Activated naive CD4-positive, alpha-beta T cell treated with anti-CD3 and anti-CD28 coated beads for 36 hours (primary cell): ENCODE measurements at regions of chr12 and their contacts with region 1.

Region 1: DNA sequence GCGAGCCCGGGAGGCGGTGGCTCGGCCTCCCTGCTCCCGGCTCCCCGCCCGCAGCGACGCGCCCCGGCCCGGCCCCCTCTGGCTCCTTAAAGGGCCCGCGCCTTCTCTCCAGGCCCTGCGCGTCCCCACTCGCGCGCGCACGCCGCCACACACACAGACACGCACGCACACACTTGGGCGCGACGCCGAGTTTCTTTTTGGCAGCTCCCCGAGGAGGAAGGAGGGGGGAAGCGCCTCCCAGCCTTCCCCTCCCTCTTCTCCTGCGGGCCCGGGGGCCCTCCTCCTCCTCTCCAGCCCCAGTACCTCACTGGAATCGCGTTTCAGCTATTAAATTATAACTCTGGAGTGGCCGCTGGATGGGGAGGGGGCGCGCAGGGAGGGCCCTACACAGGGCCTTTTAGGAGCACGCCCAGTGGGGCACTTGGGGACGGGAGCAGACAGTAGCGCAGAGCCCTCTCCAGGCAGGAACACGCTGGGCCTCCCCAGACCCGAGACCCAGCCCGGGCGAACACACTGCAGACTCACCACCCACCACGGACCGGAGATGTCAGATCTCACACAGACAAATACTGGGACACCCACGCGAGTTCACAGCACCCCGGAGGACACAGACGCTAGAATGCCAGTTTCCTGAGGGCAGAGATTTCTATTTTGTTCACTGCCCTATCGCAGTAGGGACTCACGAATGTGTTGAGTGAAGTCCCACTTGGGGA is 405 bp upstream of the NCOR2 start:
- DNase-seq: peak; percentile 77
- H3K4me3 Mint-ChIP-seq: peak overlapping the region; percentile 80
- H3K27ac Mint-ChIP-seq: peak overlapping the region; percentile 87
- H3K4me1 Mint-ChIP-seq: peaks cover 33% of the 10 kb centered on the region
- H3K27me3 Mint-ChIP-seq: no peaks in the 10 kb centered on the region

Region 2: DNA sequence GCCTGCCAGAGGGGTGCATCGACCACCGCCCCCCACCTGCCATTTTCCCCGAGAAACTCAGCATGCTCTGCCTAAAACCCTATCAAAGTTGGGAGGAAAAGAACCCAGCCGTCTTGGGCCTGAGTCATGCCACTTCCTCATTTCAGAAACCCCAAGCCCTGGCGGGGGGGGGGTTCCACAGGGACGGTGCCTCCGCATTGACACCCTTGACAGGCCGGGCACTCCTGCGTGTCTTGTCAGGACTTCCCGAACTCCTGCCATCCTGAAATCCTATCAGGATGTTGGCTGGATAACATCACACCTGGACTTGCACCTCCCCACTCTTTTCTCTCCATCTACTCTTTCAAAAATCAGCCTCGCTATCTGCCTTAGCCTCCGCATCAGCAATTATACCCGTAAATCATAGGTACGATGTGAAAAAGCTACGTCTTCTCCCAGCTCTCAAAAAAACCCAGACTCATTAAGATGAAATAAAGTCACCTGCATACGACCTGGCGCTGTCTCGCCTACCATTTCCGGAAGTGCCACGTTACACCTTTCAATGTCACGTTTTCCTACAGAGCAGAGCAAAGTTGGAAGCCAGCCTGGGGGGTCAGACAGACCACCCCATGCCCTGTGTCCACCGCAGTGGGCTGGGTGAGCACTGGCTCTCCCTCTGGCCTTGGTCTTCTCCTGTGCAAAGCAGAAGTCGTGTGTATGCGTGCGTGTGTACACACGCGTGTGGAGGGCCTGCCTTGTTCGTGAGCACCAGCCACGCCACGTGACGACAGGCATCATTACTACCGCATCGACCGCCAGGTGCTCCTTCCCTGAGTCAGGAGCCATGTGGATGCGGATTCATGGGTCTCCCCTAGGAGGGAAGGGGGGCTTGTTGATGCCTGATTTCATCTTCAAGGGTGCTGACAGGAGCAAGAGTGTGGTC is 176.2 kb before region 1 on chr12:
- CTCF ChIA-PET with region 1: interaction called, 4 read pairs
- intact Hi-C with region 1: loop called (anchors 5 kb)
- DNase-seq: peak; percentile 77
- H3K4me3 Mint-ChIP-seq: peak overlapping the region; percentile 16
- H3K27ac Mint-ChIP-seq: peak overlapping the region; percentile 88
- H3K4me1 Mint-ChIP-seq: peaks cover 34% of the 10 kb centered on the region
- H3K27me3 Mint-ChIP-seq: no peaks in the 10 kb centered on the region

Region 3: DNA sequence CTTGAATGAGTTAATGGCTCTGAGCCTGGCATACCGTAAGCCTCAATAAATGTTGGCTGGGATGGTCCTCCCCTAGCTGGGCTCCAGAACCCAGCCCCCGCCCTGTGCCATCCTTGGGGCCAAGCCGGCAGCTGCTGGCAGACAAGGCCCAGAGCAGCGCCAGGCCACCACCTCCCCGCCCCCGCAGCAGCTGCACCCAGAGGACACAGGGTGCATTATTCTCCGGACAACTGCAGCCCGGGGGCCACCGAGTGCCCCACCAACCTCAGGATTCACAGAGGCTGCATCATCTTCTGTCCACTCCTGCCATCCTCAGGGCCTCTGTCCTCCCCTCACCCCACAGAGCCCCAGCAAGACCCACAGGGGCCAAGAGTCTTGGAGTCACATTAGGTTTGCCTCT is 93.1 kb before region 1 on chr12:
- CTCF ChIA-PET with region 1: no interaction called
- intact Hi-C with region 1: no loop called
- DNase-seq: no peak
- H3K4me3 Mint-ChIP-seq: no peak overlapping the region
- H3K27ac Mint-ChIP-seq: no peak overlapping the region
- H3K4me1 Mint-ChIP-seq: peaks cover 17% of the 10 kb centered on the region
- H3K27me3 Mint-ChIP-seq: no peaks in the 10 kb centered on the region

Region 4: DNA sequence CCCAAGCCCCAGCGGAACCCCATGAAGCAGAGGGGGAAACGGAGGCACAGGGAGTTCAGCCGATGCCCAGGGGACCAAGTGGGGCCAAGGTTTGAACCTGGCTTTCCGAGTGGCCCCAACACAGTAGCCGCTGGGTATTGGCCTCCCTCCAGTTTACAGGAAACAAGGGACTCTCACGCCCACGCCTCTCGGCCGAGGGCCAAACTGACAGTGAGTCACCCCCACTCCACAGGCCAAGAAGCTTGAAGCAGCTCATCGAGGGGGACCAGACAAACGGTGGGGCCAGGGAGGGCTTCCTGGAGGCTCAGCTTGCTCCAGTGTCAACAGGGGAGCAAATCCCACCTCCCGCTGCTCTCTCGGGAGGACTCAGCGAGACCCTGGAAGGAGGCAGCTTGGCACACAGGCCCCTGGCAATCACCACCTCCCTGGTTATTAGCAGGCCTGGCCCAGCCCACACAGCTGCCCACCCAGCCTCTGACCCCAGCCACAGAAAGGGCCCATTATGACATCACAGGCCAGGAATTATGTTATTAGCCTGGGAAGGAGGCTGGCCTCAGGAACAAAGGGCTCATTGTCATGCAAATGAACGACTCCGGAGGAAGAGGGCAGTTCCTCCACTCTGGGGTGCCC is 55.0 kb before region 1 on chr12:
- CTCF ChIA-PET with region 1: no interaction called
- intact Hi-C with region 1: no loop called
- DNase-seq: no peak
- H3K4me3 Mint-ChIP-seq: no peak overlapping the region
- H3K27ac Mint-ChIP-seq: no peak overlapping the region
- H3K4me1 Mint-ChIP-seq: peaks cover 17% of the 10 kb centered on the region
- H3K27me3 Mint-ChIP-seq: no peaks in the 10 kb centered on the region

Region 5: GRCh38 chr12:124609041-124609995 is 41.5 kb after region 1 on chr12:
- CTCF ChIA-PET with region 1: no interaction called
- intact Hi-C with region 1: loop called (anchors 1 kb)
- DNase-seq: peak; percentile 93
- H3K4me3 Mint-ChIP-seq: peak overlapping the region; percentile 33
- H3K27ac Mint-ChIP-seq: no peak overlapping the region
- H3K4me1 Mint-ChIP-seq: peaks cover 21% of the 10 kb centered on the region
- H3K27me3 Mint-ChIP-seq: peaks cover 2% of the 10 kb centered on the region

Region 6: DNA sequence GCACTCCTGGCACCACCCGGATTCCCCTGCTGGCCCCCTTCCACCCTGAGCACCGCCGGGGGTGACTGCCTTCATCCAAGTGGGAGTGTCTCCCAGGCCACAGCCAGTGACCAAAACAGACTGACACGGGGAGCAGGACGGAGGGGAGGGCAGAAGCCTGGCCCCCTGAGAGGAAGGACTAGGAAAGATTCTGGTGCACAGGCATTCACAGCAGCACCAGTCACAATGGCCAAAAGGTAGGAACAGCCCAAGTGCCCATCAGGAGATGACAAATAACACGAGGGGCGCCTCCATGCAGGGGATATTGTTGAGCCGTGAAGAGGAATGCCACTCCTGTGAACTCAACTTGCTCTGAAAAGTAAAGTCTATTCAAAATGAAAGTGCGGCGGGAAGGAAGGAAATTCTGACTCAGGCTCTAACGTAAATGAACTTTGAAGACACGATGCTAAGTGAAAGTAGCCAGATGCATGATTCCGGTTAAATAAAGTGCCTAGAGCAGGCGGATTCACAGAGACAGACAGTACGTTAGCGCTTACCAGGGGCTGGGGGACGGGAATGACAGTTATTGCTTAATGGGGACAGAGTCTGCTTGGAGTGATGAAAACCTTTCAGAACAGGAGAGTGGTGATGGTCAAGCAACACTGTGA is 145.7 kb after region 1 on chr12:
- CTCF ChIA-PET with region 1: interaction called, 3 read pairs
- intact Hi-C with region 1: loop called (anchors 1 kb)
- DNase-seq: peak; percentile 92
- H3K4me3 Mint-ChIP-seq: peak overlapping the region; percentile 0
- H3K27ac Mint-ChIP-seq: peak overlapping the region; percentile 64
- H3K4me1 Mint-ChIP-seq: peaks cover 21% of the 10 kb centered on the region
- H3K27me3 Mint-ChIP-seq: no peaks in the 10 kb centered on the region

Region 7: DNA sequence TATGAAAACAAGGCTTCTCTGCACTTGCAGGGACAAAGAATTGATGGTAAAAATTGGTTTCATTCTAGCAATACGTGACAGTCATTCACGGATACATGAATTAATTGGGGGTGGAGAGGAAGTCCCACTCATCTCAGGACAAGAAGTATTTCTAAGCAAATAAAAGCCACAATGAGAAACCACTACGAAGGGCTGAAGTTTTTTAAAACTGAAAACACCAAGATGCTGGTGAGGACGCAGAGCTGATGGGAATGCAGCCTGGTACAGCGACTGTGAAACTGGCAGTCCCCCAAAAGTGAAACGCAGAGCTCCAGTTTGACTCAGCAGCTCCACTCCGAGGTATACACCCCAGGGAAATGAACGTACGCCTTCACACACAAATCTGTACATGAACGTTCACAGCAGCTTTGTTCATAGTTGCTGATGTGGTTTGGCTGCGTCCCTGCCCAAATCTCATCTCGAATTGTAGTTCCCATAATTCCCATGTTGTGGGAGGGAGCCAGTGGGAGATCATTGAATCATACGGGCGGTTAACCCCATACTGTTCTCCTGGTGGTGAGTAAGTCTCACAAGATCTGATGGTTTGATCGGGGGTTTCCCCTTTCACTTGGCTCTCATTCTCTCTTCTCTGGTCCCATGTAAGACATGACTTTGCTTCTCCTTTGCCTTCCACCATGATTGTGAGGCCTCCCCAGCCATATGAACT is 206.8 kb after region 1 on chr12:
- CTCF ChIA-PET with region 1: interaction called, 3 read pairs
- intact Hi-C with region 1: loop called (anchors 1 kb)
- DNase-seq: peak; percentile 96
- H3K4me3 Mint-ChIP-seq: no peak overlapping the region
- H3K27ac Mint-ChIP-seq: peak overlapping the region; percentile 93
- H3K4me1 Mint-ChIP-seq: peaks cover 40% of the 10 kb centered on the region
- H3K27me3 Mint-ChIP-seq: peaks cover 15% of the 10 kb centered on the region

Region 8: DNA sequence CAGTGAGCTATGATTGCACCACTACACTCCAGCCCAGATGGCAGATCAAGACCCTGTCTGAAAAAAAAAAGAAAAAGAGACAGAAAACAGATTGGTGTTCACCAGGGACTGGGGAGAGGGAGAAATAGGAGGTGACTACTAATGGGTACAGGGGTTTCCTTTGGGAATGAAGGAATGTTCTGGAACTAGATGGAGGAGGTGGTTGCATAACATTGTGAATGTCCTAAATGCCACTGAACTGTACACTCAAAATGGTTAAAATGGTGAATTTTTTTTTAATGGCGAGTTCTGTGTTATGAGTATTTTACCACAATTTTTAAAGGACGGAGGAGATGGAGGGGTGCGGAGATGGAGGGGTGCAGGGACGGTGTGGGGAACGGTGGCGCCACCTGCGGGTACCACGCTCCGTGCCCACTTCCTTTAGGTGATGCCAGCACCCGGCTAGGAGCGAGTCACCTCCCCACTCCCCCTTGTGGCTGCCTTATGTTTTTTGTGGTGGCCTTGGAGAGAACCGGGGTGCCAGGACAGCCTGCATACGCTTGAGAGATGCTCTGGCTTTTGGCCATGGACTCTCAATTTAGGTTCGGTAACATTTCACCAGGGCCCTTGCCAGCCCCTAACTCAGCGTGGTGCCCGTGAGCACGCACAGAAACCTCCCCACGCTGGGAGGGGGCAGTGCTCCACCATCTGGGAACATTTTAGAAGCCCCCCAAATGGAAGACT is 330.5 kb after region 1 on chr12:
- CTCF ChIA-PET with region 1: no interaction called
- intact Hi-C with region 1: no loop called
- DNase-seq: peak; percentile 82
- H3K4me3 Mint-ChIP-seq: peak overlapping the region; percentile 34
- H3K27ac Mint-ChIP-seq: no peak overlapping the region
- H3K4me1 Mint-ChIP-seq: peaks cover 12% of the 10 kb centered on the region
- H3K27me3 Mint-ChIP-seq: no peaks in the 10 kb centered on the region